ENCODE measurements at regions of chr5 and their contacts with region 1.

Region 1: GRCh38 chr5:75351139-75351926 is 14.3 kb downstream of the HMGCR start:
- DNase-seq: no peak
- ATAC-seq: peak; percentile 76
- H3K4me3 ChIP-seq: no peak overlapping the region
- H3K27ac ChIP-seq: no peak overlapping the region
- H3K4me1 ChIP-seq: no peaks in the 10 kb centered on the region; the same call in 1 of the 2 replicates
- H3K27me3 ChIP-seq: no peaks in the 10 kb centered on the region
- CTCF ChIP-seq: no peak
- EP300 ChIP-seq: no peak
- POLR2A ChIP-seq: no peak
- RAD21 ChIP-seq: no peak

Region 2: GRCh38 chr5:75363726-75364495 is 12.6 kb after region 1 on chr5:
- CTCF ChIA-PET with region 1: interaction called, 3 read pairs
- POLR2A ChIA-PET with region 1: interaction called, 4 read pairs
- RAD21 ChIA-PET with region 1: interaction called, 5 read pairs
- SMC1A ChIA-PET with region 1: interaction called, 27 read pairs
- in situ Hi-C with region 1: no loop called
- intact Hi-C with region 1: no loop called
- DNase-seq: no peak
- ATAC-seq: no peak
- H3K4me3 ChIP-seq: no peak overlapping the region
- H3K27ac ChIP-seq: no peak overlapping the region
- H3K4me1 ChIP-seq: peaks cover 14% of the 10 kb centered on the region
- H3K27me3 ChIP-seq: no peaks in the 10 kb centered on the region
- CTCF ChIP-seq: no peak
- EP300 ChIP-seq: no peak
- POLR2A ChIP-seq: 0 out of 2 replicates have a peak, but pooled peaks have one; percentile 29
- RAD21 ChIP-seq: no peak

Region 3: DNA sequence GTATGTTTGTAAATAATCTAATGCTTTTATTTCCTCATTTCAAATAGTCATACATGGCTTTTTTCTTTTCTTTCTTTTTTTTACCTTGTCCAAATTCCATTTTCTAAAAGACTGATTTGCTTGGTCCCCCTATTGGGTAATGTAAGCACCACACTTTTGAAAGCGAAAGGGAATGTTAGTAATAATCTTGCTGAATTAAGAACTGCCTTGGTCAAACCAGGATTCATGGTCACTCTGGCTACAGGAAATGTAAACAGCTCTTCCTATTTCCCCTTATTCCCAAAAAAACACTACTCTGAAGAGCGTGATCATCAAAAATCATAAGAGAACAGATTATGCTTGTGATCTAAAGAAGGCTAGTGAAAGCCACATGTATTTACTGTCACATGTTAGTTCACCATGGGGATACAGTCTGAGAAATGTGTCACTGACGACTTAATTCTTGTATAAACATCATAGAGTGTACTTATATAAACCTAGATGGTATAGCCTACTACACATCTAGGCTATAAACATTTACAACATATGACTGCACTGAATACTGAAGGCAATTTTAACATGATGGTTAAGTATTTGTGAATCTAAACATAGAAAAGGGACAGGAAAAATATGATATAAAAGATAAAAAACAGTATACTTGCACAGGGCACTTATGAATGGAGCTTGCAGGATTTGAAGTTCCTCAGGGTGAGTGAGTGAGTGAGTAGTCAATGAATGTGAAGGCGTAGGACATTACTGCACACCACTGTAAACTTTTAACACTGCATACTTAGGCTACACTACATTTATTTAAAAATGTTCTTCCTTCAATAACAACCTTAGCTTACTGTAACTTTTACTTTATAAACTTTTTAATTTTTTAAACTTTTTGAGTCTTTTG is 61.0 kb after region 1 on chr5:
- CTCF ChIA-PET with region 1: no interaction called
- POLR2A ChIA-PET with region 1: no interaction called
- RAD21 ChIA-PET with region 1: no interaction called
- SMC1A ChIA-PET with region 1: no interaction called
- in situ Hi-C with region 1: no loop called
- intact Hi-C with region 1: loop called (anchors 10 kb)
- DNase-seq: no peak
- ATAC-seq: peak; percentile 34; the same call in 1 of the 3 replicates
- H3K4me3 ChIP-seq: no peak overlapping the region
- H3K27ac ChIP-seq: no peak overlapping the region
- H3K4me1 ChIP-seq: no peaks in the 10 kb centered on the region
- H3K27me3 ChIP-seq: no peaks in the 10 kb centered on the region
- CTCF ChIP-seq: no peak
- EP300 ChIP-seq: no peak
- POLR2A ChIP-seq: no peak
- RAD21 ChIP-seq: no peak

Region 4: DNA sequence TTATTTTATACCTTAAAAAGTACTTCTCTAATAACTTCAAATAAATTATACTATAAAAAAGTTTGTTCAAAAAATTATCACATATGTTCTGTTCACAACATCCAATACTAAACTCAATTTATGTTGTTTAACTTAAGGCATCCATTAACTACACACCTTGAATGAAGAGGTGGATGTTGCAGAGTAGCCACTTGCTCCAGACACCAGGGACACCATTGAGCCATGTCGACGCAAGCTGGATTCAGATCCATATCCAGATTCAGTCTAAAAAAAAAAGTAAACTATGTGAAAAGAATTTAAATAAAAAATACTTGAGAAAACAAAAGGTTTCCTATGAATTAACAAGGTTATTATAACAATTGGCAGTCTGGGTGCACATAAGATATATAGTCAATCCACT is 74.9 kb after region 1 on chr5:
- CTCF ChIA-PET with region 1: no interaction called
- POLR2A ChIA-PET with region 1: no interaction called
- RAD21 ChIA-PET with region 1: no interaction called
- SMC1A ChIA-PET with region 1: no interaction called
- in situ Hi-C with region 1: no loop called
- intact Hi-C with region 1: no loop called
- DNase-seq: no peak
- ATAC-seq: no peak
- H3K4me3 ChIP-seq: no peak overlapping the region
- H3K27ac ChIP-seq: no peak overlapping the region
- H3K4me1 ChIP-seq: no peaks in the 10 kb centered on the region
- H3K27me3 ChIP-seq: no peaks in the 10 kb centered on the region
- CTCF ChIP-seq: no peak
- EP300 ChIP-seq: no peak
- POLR2A ChIP-seq: no peak
- RAD21 ChIP-seq: no peak